Activated B cell treated with CpG ODN at 0.5 μM for 24 hours (primary cell): ENCODE measurements at regions of chr7 and their contacts with region 1.

Region 1: DNA sequence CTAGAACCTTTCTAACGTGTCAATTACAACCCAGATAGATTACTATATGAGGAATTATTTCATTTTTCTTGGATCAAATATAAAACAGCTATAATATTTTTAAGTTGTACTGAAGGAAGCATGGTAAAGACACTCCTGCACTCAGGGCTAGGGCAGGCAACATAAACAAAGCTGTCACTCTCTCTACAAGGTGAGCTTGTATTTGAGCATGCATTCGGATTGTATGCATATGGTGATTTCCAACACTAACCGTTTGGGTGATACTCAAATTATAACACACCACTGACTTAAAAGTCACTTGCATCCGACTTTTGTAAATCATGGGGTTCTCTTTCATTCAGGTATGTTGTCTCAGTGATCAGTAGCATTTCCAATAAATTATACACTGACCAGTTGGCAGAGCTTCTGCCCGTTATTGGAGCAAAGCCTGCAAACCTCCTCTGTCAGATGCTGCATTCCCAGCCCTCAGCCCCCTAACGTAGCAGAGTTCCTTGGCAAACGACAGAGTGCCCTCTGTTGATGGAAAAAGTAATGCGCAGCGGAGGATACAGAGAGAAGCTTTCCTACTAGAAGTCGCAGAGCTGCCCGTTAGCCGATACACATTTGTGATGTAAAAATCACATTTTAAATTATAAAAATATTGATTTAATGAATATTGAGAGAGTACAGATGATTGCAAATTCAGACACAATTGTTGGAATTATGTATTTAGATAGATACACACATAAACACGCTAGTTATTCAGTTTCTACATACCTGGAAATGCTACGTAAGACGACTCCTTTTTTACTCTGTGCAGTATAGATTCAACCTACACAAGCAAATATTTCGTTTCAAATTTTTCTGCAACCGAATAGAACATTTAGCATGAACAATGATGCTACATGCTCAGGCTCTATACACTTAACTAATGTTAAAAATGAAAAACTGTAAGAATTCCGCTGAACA is 173.9 kb upstream of the SP4 start:
- DNase-seq: no peak
- ATAC-seq: no peak
- H3K4me3 Mint-ChIP-seq: no peak overlapping the region
- H3K27ac Mint-ChIP-seq: no peak overlapping the region
- H3K4me1 Mint-ChIP-seq: no peaks in the 10 kb centered on the region
- H3K27me3 Mint-ChIP-seq: peaks cover 37% of the 10 kb centered on the region
- CTCF ChIP-seq: no peak

Region 2: GRCh38 chr7:19747740-19748339 is 1506.2 kb before region 1 on chr7:
- CTCF ChIA-PET with region 1: interaction called, 18 read pairs
- POLR2A ChIA-PET with region 1: no interaction called
- intact Hi-C with region 1: loop called (anchors 5 kb)
- DNase-seq: no peak
- ATAC-seq: peak; percentile 25
- H3K4me3 Mint-ChIP-seq: no peak overlapping the region
- H3K27ac Mint-ChIP-seq: no peak overlapping the region
- H3K4me1 Mint-ChIP-seq: no peaks in the 10 kb centered on the region
- H3K27me3 Mint-ChIP-seq: peaks cover 6% of the 10 kb centered on the region
- CTCF ChIP-seq: no peak

Region 3: DNA sequence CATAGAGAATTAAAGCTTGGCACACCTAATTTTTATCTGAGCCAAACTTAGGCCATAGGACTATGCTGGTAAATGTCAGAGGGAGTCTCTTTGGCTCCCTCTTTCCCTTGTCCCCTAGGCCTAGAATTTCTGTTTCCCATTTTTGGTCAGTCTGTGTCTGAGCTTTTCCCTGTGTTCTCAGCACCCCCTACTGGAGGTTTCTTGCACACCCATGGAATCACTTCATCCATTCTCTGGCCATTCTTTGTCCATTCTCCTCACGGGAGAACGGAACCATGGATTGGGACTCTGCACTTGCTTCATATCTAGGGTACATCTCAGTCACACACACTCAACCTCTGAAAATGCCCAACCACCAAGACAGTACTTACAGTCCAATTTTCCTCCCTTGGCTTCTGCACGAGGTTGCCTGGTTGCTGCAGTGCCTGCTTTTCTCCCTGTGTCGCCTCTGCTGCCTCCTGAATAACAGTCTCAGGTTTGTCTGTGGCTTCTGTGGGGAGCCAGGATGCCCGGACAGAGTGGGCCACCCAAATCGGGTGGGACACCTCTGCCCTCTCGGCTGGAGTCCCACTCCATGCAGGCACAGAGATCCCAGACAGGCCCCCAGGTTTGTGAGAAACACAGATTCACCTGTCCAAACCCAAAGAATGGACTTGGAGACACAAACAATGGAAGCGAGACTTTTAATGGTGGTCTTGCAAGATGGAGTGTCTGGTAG is 253.8 kb after region 1 on chr7:
- CTCF ChIA-PET with region 1: interaction called, 30 read pairs
- POLR2A ChIA-PET with region 1: no interaction called
- intact Hi-C with region 1: loop called (anchors 1 kb)
- DNase-seq: no peak
- ATAC-seq: no peak
- H3K4me3 Mint-ChIP-seq: no peak overlapping the region
- H3K27ac Mint-ChIP-seq: no peak overlapping the region
- H3K4me1 Mint-ChIP-seq: no peaks in the 10 kb centered on the region
- H3K27me3 Mint-ChIP-seq: no peaks in the 10 kb centered on the region
- CTCF ChIP-seq: no peak

Region 4: DNA sequence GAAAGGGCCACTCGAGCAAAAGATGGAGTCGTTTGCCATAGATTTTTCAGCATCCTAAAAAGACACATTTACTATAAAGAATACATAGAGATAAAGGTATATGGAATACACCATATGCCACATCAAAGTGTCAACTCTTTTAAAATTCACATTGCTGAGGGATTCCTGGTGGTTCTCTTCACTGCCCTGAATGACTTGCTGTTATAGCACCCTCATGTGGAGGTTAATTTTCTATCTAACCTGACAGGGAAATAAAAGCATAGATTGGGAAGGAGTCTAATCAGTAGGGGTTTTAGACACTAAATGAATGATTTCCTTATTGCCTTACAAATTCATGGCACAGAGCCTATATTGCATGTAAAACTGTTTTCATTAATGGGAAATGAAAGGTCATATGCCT is 314.7 kb after region 1 on chr7:
- CTCF ChIA-PET with region 1: interaction called, 3 read pairs
- POLR2A ChIA-PET with region 1: no interaction called
- intact Hi-C with region 1: loop called (anchors 1 kb)
- DNase-seq: no peak
- ATAC-seq: no peak
- H3K4me3 Mint-ChIP-seq: no peak overlapping the region
- H3K27ac Mint-ChIP-seq: no peak overlapping the region
- H3K4me1 Mint-ChIP-seq: no peaks in the 10 kb centered on the region
- H3K27me3 Mint-ChIP-seq: peaks cover 19% of the 10 kb centered on the region
- CTCF ChIP-seq: no peak

Region 5: GRCh38 chr7:22082886-22083703 is 829.1 kb after region 1 on chr7:
- CTCF ChIA-PET with region 1: interaction called, 11 read pairs
- POLR2A ChIA-PET with region 1: no interaction called
- intact Hi-C with region 1: loop called (anchors 1 kb)
- DNase-seq: peak; percentile 91
- ATAC-seq: peak; percentile 97
- H3K4me3 Mint-ChIP-seq: peak overlapping the region; percentile 89
- H3K27ac Mint-ChIP-seq: peak overlapping the region; percentile 70
- H3K4me1 Mint-ChIP-seq: peaks cover 13% of the 10 kb centered on the region
- H3K27me3 Mint-ChIP-seq: peaks cover 25% of the 10 kb centered on the region
- CTCF ChIP-seq: peak; percentile 83